ENCODE measurements at regions of chr7 and their contacts with region 1.

Region 1: GRCh38 chr7:2692543-2692942 is 4.5 kb downstream of the AMZ1 start:
- DNase-seq: no peak
- ATAC-seq: no peak
- H3K4me3 ChIP-seq: no peak overlapping the region
- H3K4me3 Mint-ChIP-seq: no peak overlapping the region
- H3K27ac ChIP-seq: no peak overlapping the region
- H3K27ac Mint-ChIP-seq: no peak overlapping the region
- H3K4me1 ChIP-seq: peaks cover 12% of the 10 kb centered on the region
- H3K4me1 Mint-ChIP-seq: peaks cover 5% of the 10 kb centered on the region
- H3K27me3 ChIP-seq: peaks cover 18% of the 10 kb centered on the region in 2 experiments
- H3K27me3 Mint-ChIP-seq: peaks cover 26% of the 10 kb centered on the region
- CTCF ChIP-seq: no peak

Region 2: DNA sequence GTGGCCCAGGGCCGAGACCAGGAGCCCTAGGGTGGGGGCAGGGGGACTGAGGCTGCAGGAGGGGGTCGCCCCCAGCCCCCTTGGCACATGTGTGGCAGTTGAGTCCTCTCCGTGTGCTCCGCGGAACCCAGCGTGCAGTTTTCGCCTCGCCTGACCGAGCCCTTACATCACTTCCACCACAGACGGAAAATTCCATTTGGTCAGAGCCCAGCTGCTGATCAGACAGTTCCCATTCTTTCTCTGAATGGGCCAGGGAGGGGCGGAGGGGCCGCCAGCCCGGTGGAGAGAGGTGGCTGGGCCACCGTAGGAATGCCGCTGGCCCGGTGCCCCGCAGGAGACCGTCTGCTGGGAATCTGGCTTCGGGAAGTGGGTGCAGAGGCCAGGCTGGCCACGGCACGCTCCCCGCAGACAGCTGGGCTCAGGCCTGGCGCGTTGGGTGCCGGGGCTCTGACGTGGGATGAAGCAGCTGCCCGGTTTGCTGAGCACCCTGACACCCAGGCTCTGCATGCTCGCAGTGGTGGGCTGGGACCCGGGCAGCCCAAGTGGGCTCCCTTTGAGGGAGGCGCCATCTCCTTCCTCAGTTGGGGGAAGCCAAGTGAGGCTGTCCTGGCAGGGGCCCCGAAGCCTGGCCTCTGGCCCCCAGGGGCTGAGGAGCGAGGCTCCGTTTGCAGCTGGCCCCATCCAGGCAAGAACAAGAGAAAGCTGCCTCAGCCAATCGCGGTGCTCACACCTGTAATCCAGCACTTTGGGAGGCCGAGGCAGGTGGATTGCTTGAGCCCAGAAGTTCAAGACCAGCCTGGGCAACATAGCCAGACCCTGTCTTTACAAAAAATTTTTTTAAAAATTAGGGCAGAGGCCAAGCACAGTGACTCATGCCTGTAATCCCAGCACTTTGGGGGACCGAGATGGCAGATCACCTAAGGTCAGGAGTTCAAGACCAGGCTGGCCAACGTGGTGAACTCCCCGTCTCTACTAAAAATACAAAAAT is 50.8 kb before region 1 on chr7:
- CTCF ChIA-PET with region 1: no interaction called
- POLR2A ChIA-PET with region 1: no interaction called
- intact Hi-C with region 1: no loop called
- DNase-seq: peak in 2 of 14 experiments; percentile 55 to 58
- ATAC-seq: no peak
- H3K4me3 ChIP-seq: no peak overlapping the region
- H3K4me3 Mint-ChIP-seq: no peak overlapping the region
- H3K27ac ChIP-seq: no peak overlapping the region
- H3K27ac Mint-ChIP-seq: no peak overlapping the region
- H3K4me1 ChIP-seq: peaks cover 23% of the 10 kb centered on the region
- H3K4me1 Mint-ChIP-seq: peaks cover 10% of the 10 kb centered on the region
- H3K27me3 ChIP-seq: no peaks in the 10 kb centered on the region
- H3K27me3 Mint-ChIP-seq: no peaks in the 10 kb centered on the region
- CTCF ChIP-seq: no peak

Region 3: DNA sequence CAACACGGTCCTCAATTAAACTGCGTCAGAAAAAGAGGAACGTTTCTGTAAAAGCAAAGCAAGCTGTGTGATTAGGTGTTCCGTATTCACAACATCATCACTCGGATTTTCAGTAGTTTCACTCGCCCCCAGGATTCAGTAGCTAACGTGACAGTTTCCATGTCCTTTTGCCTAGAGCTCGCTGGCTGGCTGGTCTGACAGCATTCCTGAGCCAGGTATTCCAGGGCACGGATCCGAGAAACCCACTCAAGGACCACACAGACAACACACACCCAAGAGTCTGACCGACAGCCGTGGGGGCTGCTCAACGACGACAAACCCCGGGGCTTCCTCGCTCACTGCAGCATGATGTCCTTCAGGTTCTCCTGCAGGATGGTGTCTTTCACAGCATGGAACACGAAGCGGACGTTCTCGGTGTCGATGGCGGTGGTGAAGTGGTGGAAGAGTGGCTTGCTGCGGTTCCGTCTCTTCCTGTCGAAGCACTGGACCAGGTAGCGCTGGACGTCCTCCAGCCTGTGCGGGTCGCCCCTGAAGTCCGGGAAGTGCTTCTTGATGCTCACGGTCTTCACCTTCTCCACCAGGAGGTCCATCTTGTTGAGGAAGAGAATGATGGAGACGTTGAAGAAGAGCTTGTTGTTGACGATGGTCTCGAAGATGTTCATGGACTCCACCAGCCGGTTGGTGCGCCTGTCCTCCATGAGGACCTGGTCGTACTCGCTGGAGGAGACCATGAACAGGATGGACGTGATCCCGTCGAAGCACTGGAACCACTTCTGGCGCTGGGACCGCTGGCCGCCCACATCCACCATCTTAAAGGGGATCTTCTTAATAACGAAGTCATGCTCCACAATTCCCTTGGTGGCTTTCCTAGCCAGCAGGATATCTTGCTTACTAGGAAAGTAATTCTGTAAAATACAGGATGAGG is 38.6 kb after region 1 on chr7:
- CTCF ChIA-PET with region 1: no interaction called
- POLR2A ChIA-PET with region 1: no interaction called
- intact Hi-C with region 1: loop called in 1 of 2 experiments (anchors 1 kb)
- DNase-seq: peak in 1 of 14 experiments; percentile 17
- ATAC-seq: no peak
- H3K4me3 ChIP-seq: no peak overlapping the region
- H3K4me3 Mint-ChIP-seq: no peak overlapping the region
- H3K27ac ChIP-seq: no peak overlapping the region
- H3K27ac Mint-ChIP-seq: no peak overlapping the region
- H3K4me1 ChIP-seq: peaks cover 7% of the 10 kb centered on the region
- H3K4me1 Mint-ChIP-seq: peaks cover 24% of the 10 kb centered on the region
- H3K27me3 ChIP-seq: no peaks in the 10 kb centered on the region
- H3K27me3 Mint-ChIP-seq: no peaks in the 10 kb centered on the region
- CTCF ChIP-seq: no peak